Activated naive CD4-positive, alpha-beta T cell treated with anti-CD3 and anti-CD28 coated beads for 36 hours (primary cell): ENCODE measurements at regions of chr10 and their contacts with region 1.

Region 1: DNA sequence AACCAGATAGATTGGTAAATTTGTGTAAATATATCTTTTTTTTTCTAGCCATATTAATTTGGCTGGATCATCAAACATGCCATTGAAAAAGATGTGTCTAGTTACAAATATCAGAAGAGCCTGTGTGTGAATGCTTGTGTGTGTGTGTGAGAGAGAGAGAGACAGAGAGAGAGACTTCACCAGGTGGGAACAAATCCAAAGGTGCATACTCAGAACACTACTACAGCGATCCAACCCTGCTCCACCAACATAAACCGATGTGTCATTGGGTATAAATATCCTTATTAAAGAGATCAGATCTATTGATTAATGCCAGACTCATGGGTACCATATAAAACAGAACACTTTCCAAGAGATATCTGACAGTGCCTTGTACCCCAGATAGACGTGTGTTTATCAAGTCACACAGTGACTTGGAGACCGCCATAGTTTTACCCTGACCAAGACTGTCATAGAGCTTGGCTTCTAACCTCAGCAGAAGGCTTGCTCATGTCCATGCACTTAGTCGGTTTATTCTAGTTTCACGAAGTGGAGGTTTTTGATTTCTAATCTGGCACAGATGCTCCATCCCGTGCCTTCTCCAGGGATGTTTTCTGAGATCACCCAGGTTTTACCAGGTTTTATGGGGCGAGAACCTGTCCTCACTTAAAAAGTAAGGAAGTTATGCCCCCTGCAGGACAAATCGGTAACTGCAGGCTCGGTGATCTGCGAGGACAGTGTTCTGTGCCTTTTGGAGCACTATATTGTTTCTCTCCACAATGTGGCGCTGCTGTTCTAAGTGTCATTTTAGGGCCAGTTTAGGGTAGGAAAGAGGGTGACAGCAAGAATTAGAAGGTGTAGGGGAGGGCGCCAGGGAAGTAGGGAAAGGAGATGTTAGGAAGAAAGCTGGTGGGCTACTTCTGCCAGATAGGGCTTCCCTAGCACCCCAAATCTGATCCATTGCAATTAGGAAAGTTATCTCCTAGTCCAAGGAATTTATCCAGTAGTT is 29.3 kb upstream of the WNT8B start:
- DNase-seq: peak; percentile 99
- H3K4me3 Mint-ChIP-seq: no peak overlapping the region
- H3K27ac Mint-ChIP-seq: no peak overlapping the region
- H3K4me1 Mint-ChIP-seq: no peaks in the 10 kb centered on the region
- H3K27me3 Mint-ChIP-seq: no peaks in the 10 kb centered on the region

Region 2: GRCh38 chr10:99845837-99846382 is 587.6 kb before region 1 on chr10:
- CTCF ChIA-PET with region 1: no interaction called
- intact Hi-C with region 1: loop called (anchors 1 kb)
- DNase-seq: peak; percentile 82
- H3K4me3 Mint-ChIP-seq: no peak overlapping the region
- H3K27ac Mint-ChIP-seq: no peak overlapping the region
- H3K4me1 Mint-ChIP-seq: peaks cover 4% of the 10 kb centered on the region
- H3K27me3 Mint-ChIP-seq: no peaks in the 10 kb centered on the region

Region 3: DNA sequence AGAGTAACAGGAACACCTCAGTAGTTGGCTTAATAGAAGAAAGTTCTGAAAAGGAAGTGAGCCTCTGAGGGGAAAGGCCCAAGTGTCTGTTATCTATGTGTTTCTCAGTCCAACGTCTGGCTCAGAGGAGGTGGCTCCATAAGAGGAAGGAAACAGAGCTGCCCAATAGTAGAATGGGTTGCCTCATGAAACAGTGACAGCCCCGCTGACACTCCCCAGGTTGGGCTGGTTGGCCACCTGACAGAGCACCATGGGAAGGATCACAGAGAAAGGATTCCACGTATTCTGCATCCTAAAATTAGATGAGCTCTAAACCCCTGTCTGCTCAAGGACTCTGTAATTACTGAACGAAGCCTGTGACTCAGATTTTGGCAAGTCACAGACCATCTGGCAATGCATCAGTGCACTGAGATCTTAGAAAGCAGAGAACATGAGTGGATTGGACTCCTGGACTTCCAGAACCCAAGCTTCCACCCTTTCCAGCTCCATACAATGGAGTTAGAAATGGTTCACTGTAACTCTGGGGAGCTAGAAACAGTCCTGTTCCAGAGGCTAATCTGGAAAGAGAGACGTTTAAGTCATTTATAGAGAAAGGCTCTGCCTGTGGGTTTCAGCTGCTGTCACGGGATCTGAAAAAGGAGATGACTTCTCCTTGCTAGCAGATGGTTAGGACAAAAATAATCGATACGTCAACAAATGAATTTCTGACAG is 106.4 kb before region 1 on chr10:
- CTCF ChIA-PET with region 1: interaction called, 14 read pairs
- intact Hi-C with region 1: no loop called
- DNase-seq: peak; percentile 82
- H3K4me3 Mint-ChIP-seq: peak overlapping the region; percentile 5
- H3K27ac Mint-ChIP-seq: peak overlapping the region; percentile 80
- H3K4me1 Mint-ChIP-seq: peaks cover 16% of the 10 kb centered on the region
- H3K27me3 Mint-ChIP-seq: peaks cover 4% of the 10 kb centered on the region

Region 4: GRCh38 chr10:100373298-100374136 is 60.0 kb before region 1 on chr10:
- CTCF ChIA-PET with region 1: interaction called, 6 read pairs
- intact Hi-C with region 1: loop called (anchors 1 kb)
- DNase-seq: peak; percentile 99
- H3K4me3 Mint-ChIP-seq: no peak overlapping the region
- H3K27ac Mint-ChIP-seq: no peak overlapping the region
- H3K4me1 Mint-ChIP-seq: peaks cover 30% of the 10 kb centered on the region
- H3K27me3 Mint-ChIP-seq: no peaks in the 10 kb centered on the region

Region 5: GRCh38 chr10:100391163-100392002 is 42.2 kb before region 1 on chr10:
- CTCF ChIA-PET with region 1: no interaction called
- intact Hi-C with region 1: no loop called
- DNase-seq: no peak
- H3K4me3 Mint-ChIP-seq: no peak overlapping the region
- H3K27ac Mint-ChIP-seq: no peak overlapping the region
- H3K4me1 Mint-ChIP-seq: peaks cover 5% of the 10 kb centered on the region
- H3K27me3 Mint-ChIP-seq: no peaks in the 10 kb centered on the region

Region 6: GRCh38 chr10:100518761-100519241 is 85.3 kb after region 1 on chr10:
- CTCF ChIA-PET with region 1: interaction called, 29 read pairs
- intact Hi-C with region 1: loop called (anchors 1 kb)
- DNase-seq: peak; percentile 86
- H3K4me3 Mint-ChIP-seq: no peak overlapping the region
- H3K27ac Mint-ChIP-seq: no peak overlapping the region
- H3K4me1 Mint-ChIP-seq: peaks cover 12% of the 10 kb centered on the region
- H3K27me3 Mint-ChIP-seq: peaks cover 1% of the 10 kb centered on the region

Region 7: DNA sequence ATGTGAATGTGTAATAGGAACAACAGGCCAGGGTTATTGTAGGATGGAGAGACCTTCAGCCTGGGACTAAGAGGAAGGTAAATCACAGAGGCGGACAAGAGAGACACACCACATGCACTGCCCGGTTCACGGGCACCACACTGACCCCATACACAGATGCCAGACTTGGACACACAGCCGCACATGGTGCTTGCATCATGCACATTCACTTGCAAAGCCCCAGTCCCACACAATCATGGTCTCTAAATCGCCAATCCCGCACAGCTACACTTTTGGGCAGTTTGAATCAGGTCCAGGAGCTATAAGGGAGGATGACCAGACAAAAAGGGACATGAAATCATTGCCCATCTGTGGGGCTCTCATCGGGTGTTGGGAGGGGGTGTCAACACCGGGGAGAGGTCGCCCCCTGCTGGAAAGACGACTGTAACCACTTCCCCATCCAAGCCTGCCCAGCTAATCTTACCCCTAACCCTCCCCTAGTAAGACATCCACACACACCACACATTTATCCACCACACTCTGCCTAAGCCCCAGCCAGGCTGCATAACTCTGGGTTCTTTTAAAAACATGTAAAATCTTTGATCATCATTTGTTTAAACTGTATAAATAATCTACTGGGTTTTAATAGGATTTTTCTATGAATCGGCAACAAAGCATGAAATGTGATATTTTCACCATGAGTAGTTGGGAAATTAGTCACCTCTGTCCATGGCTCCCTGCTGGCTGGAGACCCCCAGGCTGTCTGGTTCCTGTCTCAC is 438.7 kb after region 1 on chr10:
- CTCF ChIA-PET with region 1: no interaction called
- intact Hi-C with region 1: loop called (anchors 5 kb)
- DNase-seq: peak; percentile 82
- H3K4me3 Mint-ChIP-seq: no peak overlapping the region
- H3K27ac Mint-ChIP-seq: no peak overlapping the region
- H3K4me1 Mint-ChIP-seq: no peaks in the 10 kb centered on the region
- H3K27me3 Mint-ChIP-seq: peaks cover 11% of the 10 kb centered on the region